ENCODE measurements at regions of chr19 and their contacts with region 1.

Region 1: DNA sequence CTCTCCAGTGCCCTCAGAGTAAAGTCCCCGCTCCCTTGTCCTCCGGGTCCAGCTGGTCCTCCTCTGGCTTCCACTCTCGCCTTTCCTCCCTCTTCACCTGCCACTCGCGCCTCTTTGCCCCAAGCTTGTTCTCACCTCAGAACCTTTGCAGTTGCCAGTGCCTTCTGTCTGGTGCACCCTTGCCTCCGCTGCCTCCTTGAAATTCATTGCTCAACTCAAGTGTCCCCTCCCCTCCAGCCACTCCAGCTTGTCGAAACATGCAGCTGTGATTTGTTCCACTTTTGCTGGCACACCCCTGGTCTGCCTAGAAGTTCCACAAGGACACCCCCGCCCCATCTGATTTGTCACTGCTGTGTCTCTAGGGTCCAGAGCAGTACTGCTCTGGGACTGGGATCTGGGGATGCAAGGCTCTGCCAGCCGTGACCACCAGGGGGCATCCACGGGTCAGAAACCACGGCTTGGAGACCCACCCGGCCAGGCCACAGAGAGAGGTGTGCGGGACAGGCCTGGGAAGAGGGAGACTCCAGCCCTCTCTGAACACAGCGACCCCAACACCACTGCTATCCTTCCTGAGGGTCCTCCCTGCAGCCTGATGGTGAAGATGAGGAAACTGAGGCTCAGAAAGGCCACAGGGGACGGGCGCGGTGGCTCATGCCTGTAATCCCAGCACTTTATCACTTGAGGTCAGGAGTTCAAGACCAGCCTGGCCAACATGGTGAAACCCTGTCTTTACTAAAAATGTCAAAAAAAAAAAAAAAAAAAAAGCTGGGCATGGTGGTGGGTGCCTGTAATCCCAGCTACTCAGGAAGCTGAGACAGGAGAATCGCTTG is 49.9 kb downstream of the AP1M1 start:
- DNase-seq: peak; percentile 85 to 91 (median 89)
- ATAC-seq: peak; percentile 98
- H3K4me3 ChIP-seq: no peak overlapping the region
- H3K4me1 ChIP-seq: no peaks in the 10 kb centered on the region
- CTCF ChIP-seq: peak; percentile 83

Region 2: DNA sequence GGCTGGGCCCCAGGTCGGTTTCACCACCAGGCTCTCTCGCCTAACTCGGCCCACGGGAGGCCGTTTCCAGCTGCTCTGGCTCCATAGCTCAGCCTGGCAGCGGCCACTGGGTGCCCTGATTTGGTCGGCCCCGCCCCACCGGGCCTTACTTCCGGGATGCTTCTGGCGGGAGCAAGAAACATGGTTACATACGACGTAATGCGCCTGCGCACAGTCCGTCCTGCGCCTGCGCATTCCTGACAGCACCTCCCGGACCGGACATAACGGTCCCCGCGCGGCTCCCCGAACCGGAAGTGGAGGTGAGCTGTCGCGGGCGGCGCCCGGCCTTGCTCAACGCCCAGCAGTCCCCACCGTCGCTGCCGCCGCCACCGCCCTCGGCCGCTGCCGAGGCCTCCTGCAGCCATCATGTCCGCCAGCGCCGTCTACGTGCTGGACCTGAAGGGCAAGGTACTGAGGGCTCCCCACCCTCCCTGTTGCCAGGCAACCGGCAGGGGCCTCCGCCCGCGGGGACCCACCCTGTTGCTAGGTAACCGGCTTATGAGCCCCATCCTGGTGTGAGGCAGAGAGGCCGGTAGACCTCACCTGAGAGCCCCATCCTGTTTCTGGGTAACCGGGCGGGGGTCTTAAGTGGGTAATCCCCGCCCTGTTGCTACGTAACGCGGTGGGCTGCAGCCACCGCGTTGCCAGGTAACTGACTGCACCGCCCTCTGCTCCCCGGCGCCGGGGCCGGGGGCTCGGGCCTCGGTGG is 49.8 kb before region 1 on chr19 and contains the start of gene AP1M1:
- intact Hi-C with region 1: no loop called
- DNase-seq: peak; percentile 99
- ATAC-seq: peak; percentile 88
- H3K4me3 ChIP-seq: peak within 1 kb of the TSS; percentile 84
- H3K4me1 ChIP-seq: peaks cover 23% of the 10 kb centered on the region
- CTCF ChIP-seq: no peak
- total RNA-seq, gene AP1M1: 26.3 to 59.3 (median 33.2) TPM

Region 3: GRCh38 chr19:16216744-16217670 is 30.6 kb before region 1 on chr19:
- intact Hi-C with region 1: no loop called
- DNase-seq: no peak
- ATAC-seq: no peak
- H3K4me3 ChIP-seq: no peak overlapping the region
- H3K4me1 ChIP-seq: no peaks in the 10 kb centered on the region
- CTCF ChIP-seq: no peak

Region 4: DNA sequence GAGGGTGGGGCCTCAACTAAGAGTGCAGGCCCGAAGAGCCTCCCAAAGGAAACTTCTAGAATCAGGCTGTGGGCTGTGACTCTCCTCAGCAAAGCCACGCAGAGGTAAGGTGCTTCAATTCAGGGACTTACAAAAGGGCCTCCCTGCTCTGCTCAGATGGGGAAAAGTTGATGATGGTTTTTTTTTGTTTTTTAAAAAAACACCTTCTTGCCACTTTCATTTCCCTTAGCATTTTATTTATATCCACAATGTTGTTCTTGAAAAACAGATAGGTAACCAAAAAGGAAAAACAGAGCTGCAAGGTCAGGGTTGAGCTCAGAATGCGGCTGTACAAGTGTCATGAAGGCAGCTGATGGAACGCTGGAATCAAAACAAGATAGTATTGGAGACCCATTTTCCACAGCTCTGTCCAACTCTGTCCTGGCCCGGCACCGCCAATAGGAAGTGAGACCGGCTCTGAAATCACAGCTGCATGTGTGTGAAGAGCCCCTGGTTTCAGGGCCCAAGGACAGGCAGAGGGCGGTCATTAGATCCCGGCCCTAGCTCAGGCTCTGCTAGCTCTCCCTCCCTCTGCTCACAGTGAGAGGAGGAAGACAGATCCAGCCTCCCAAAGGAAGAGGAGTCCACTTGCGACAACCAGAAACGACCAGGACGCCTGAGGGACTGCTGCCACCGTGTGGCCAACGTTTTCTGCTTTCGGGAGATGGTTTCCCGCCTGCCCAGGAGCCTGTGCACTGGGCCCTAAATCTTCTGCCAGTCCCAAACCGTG is 135.4 kb after region 1 on chr19:
- intact Hi-C with region 1: loop called (anchors 2 to 5 kb)
- DNase-seq: peak; percentile 84 to 92 (median 88)
- ATAC-seq: peak; percentile 90
- H3K4me3 ChIP-seq: no peak overlapping the region
- H3K4me1 ChIP-seq: peaks cover 7% of the 10 kb centered on the region
- CTCF ChIP-seq: peak; percentile 21

Region 5: DNA sequence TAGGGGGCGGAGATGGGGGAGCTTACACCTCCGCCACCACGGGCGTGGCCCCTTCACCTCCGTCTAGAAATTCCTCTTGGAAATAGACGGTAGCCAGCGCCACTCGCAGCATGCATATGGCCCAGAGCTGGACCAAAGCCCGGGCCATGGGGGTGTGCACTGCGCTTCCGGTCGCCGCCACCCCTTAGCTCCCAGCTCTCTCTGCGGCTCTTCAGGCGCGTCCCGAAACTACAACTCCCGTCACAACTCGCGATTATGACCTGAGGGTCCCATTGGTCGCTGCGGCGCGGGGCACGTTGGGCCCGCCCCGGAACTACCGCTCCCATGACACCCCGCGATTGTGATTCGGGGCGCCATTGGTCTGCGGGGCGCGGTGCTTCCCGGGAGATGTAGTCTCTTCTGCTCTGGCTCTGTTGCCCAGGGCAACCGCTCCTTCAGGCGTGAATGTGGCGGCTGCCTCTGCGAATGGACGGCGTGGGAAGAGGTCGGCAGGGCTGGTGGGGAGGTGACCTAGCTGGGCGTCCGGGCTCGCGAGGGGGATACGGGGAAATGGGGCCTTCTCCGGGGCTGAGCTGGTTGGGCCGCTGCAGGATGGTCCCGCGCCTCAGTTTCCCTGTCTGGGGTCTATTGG is 248.5 kb after region 1 on chr19 and contains the starts of genes C19orf44 and CALR3:
- intact Hi-C with region 1: no loop called
- DNase-seq: peak; percentile 98 to 99 (median 99)
- ATAC-seq: peak; percentile 98
- H3K4me3 ChIP-seq: peak within 1 kb of the TSS; percentile 26
- H3K4me1 ChIP-seq: peaks cover 6% of the 10 kb centered on the region
- CTCF ChIP-seq: no peak
- total RNA-seq, gene C19orf44: 2.0 to 8.4 (median 2.3) TPM
- total RNA-seq, gene CALR3: not detected

Measured in mucosa of descending colon (tissue), 3 donors.